ENCODE measurements at regions of chr9 and their contacts with region 1.

Region 1: DNA sequence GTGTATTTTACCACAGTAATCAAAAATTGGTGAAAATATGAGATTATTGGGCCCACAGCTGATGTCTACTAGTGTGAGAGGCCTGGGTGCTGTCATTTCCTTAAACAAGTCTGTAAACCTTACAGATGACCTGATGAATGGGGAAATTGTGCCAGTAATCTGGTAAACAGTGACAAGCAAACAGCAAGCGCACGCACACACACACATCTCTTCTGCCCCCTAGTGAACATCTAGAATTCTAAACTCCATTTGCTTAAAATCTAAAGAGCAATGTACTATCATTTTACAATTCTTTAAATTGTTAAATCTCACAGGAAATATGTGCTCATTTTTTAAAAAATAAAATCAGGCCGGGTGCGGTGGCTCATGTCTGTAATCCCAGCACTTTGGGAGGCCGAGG is 7.5 kb upstream of the RAPGEF1 start:
- DNase-seq: peak in 2 of 4 experiments; percentile 34 to 64
- ATAC-seq: peak; percentile 79
- H3K4me3 ChIP-seq: no peak overlapping the region
- H3K27ac ChIP-seq: no peak overlapping the region
- H3K4me1 ChIP-seq: peaks cover 3 to 8% of the 10 kb centered on the region in 2 experiments; a peak in 2 of 5 replicates
- H3K27me3 ChIP-seq: peaks cover 4 to 24% of the 10 kb centered on the region in 2 experiments; a peak in 3 of 5 replicates
- CTCF ChIP-seq: peak; percentile 63 to 83 (median 66)
- EP300 ChIP-seq: no peak
- POLR2A ChIP-seq: no peak
- RAD21 ChIP-seq: peak; percentile 66 to 81

Region 2: GRCh38 chr9:131590908-131591844 is 156.2 kb before region 1 on chr9:
- CTCF ChIA-PET with region 1: interaction called, 79 read pairs
- POLR2A ChIA-PET with region 1: interaction called, 3 read pairs
- in situ Hi-C with region 1: loop called (anchors 5 kb)
- intact Hi-C with region 1: loop called (anchors 2 kb)
- DNase-seq: peak; percentile 72 to 77 (median 74)
- ATAC-seq: peak; percentile 95
- H3K4me3 ChIP-seq: no peak overlapping the region
- H3K27ac ChIP-seq: no peak overlapping the region
- H3K4me1 ChIP-seq: peaks cover 6 to 15% of the 10 kb centered on the region in 2 experiments; a peak in 4 of 5 replicates
- H3K27me3 ChIP-seq: no peaks in the 10 kb centered on the region
- CTCF ChIP-seq: peak; percentile 80 to 95 (median 81)
- EP300 ChIP-seq: no peak
- POLR2A ChIP-seq: no peak
- RAD21 ChIP-seq: peak; percentile 74 to 86

Region 3: GRCh38 chr9:131697097-131697496 is 50.3 kb before region 1 on chr9:
- CTCF ChIA-PET with region 1: no interaction called
- POLR2A ChIA-PET with region 1: no interaction called
- in situ Hi-C with region 1: no loop called
- intact Hi-C with region 1: no loop called
- DNase-seq: no peak
- ATAC-seq: no peak; the same call in 2 of the 3 replicates
- H3K4me3 ChIP-seq: no peak overlapping the region
- H3K27ac ChIP-seq: no peak overlapping the region
- H3K4me1 ChIP-seq: peaks cover 8 to 17% of the 10 kb centered on the region in 2 experiments
- H3K27me3 ChIP-seq: no peaks in the 10 kb centered on the region
- CTCF ChIP-seq: no peak
- EP300 ChIP-seq: no peak
- POLR2A ChIP-seq: no peak
- RAD21 ChIP-seq: no peak

Region 4: GRCh38 chr9:131733541-131734061 is 13.8 kb before region 1 on chr9:
- CTCF ChIA-PET with region 1: no interaction called
- POLR2A ChIA-PET with region 1: interaction called, 10 read pairs
- in situ Hi-C with region 1: no loop called
- intact Hi-C with region 1: no loop called
- DNase-seq: peak in 3 of 4 experiments; percentile 29 to 59 (median 55)
- ATAC-seq: peak; percentile 70
- H3K4me3 ChIP-seq: no peak overlapping the region
- H3K27ac ChIP-seq: peak overlapping the region; percentile 21; the same call in 1 of the 3 replicates
- H3K4me1 ChIP-seq: peaks cover 16 to 20% of the 10 kb centered on the region in 2 experiments
- H3K27me3 ChIP-seq: no peaks in the 10 kb centered on the region
- CTCF ChIP-seq: no peak
- EP300 ChIP-seq: no peak
- POLR2A ChIP-seq: no peak
- RAD21 ChIP-seq: no peak